ENCODE measurements at regions of chr1 and their contacts with region 1.

Region 1: DNA sequence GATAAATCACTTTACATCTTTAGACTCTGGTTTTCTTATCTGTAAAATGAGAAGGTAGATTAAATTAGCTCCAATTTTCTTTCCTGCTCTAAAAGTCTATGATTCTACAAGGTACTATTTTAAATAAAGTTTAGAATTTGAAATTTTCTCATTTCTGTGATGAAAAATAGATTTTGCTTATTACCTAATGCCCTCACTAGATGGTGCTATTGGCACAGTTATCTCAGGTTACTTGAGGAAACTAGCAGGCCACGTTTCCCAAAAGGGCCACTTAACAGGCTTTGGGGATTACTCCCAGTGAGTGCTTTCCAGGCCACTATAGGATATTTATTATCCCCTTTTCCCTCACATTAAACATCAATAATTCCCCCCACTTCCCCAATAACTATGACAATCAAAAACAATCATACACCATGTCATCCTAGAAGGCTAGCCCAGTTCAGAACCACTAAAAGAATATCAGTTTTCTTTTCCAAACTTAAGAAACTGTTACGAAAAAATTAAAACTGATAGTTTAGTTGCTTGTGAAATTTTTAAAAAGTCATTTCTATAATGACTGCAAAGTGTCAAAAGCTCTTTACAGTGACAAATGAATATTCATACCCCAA is 30.6 kb downstream of the OMA1 start:
- DNase-seq: peak in 4 of 10 donors; percentile 15 to 44 (median 31)
- H3K4me3 ChIP-seq: no peak overlapping the region
- H3K27ac ChIP-seq: peak overlapping the region in 3 of 59 donors; percentile 3 to 19 (median 8)
- H3K27me3 ChIP-seq: no peaks in the 10 kb centered on the region
- CTCF ChIP-seq: peak; percentile 62 to 97 (median 83)

Region 2: GRCh38 chr1:58546520-58547308 is 30.8 kb after region 1 on chr1 and contains the start of gene OMA1:
- intact Hi-C with region 1: loop called (anchors 2 kb)
- DNase-seq: peak; percentile 90 to 96 (median 93)
- H3K4me3 ChIP-seq: peak within 1 kb of the TSS; percentile 57 to 95 (median 82)
- H3K27ac ChIP-seq: peak within 1 kb of the TSS; percentile 87 to 100 (median 98)
- H3K27me3 ChIP-seq: no peaks in the 10 kb centered on the region
- CTCF ChIP-seq: peak; percentile 88 to 99 (median 97)
- total RNA-seq, gene OMA1: 12.0 to 51.9 (median 29.6) TPM

Region 3: DNA sequence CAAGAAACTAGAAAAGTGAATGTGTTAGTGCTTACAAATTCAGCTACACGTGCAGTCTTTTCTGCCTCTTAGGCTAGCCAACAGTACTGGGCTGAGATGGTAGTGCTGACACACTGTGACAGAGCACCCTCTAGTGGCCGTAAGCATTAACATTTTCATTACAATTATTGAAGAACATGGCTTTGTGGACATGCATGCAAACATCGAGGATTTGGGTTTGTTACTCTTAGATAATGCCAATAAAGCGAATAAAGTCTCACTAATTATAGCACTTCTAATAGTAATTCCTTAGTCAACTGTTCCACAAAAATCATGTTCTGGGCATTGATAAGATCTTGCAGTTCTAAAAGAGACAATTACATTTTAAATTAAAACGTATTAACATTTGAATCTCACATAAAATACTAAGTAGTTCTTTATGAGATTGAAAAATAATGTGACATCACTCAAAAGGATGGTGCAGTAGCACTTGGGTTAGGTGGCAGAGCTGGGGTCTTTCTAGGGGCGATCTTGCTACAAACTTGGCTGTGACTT is 136.8 kb after region 1 on chr1:
- intact Hi-C with region 1: loop called (anchors 2 to 5 kb)
- DNase-seq: peak in 9 of 10 donors; percentile 41 to 82 (median 53)
- H3K4me3 ChIP-seq: no peak overlapping the region
- H3K27ac ChIP-seq: peak overlapping the region in 8 of 59 donors; percentile 9 to 37 (median 22)
- H3K27me3 ChIP-seq: no peaks in the 10 kb centered on the region
- CTCF ChIP-seq: peak; percentile 76 to 98 (median 92)

Region 4: GRCh38 chr1:58768971-58769808 is 253.3 kb after region 1 on chr1:
- intact Hi-C with region 1: loop called in 1 of 2 experiments (anchors 10 kb)
- DNase-seq: peak; percentile 54 to 86 (median 78)
- H3K4me3 ChIP-seq: no peak overlapping the region
- H3K27ac ChIP-seq: no peak overlapping the region
- H3K27me3 ChIP-seq: no peaks in the 10 kb centered on the region
- CTCF ChIP-seq: peak; percentile 48 to 91 (median 85)

Region 5: DNA sequence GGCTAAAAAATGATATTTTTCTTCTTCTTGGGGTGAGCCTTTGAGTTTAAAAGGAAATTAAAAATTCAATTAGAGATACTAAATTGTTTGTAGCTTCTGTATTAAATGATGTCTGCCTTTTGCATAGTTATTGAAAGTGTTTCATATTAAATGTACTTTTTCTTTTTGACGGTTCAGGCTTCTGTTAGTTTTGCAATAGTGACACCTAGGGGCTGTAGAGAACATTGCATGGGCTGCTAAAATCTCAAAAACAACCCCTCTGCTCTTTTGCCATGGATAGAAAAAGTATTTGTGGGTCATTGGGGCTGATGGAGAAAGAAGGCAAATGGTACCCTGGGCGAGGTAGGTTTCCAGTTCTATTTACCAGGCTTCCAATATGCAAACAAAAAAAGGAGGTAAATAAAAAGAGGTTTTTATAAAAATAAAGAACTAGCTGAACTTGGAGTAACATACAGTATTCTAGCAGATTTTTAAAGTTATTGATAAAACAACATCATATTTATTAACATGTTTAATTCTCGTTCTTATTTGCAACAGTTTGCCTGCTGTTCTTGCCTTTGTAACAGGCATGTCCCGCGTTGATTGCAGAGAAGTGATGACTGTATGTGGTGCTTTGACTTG is 1183.4 kb after region 1 on chr1:
- intact Hi-C with region 1: loop called in 1 of 2 experiments (anchors 10 kb)
- DNase-seq: peak in 1 of 10 donors; percentile 22
- H3K4me3 ChIP-seq: no peak overlapping the region
- H3K27ac ChIP-seq: peak overlapping the region in 1 of 59 donors; percentile 2
- H3K27me3 ChIP-seq: no peaks in the 10 kb centered on the region
- CTCF ChIP-seq: peak; percentile 89 to 98 (median 95)

Region 6: DNA sequence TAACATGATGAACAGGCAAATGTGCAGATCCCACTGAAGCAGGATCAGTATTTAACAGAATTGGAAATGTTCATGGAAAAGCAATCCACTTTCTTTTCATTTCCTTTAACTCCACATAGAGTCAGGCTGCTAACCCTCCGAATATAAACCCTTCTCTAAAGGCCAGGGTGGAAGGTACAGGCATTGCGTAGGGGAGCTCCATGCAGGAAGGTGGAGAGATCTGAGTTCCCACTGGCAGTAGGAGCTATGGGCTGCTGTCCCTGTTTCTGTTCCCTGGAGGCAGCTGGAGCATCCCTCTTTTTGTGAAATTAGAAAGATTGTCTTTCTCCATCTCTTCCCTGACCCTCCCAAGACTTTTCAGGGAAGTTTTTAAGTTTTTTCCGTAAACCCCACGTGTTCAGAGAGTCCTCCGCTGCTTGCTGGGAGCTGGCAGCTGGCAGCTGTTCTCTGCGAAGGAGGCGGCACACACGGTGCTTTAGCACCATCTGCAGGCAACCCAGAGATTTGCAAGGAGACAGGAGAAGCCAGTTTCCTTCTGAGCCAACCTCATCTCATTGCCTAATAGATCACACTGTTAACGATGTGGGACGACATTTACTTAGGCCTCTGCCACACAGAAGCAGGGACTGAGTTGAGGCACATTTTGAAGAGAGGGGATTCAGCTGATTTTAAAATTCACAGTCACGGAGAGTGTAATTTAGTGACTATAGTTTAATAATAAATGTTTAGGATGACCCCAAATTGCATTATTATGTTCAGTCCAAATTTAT is 1243.4 kb after region 1 on chr1:
- intact Hi-C with region 1: loop called in 1 of 2 experiments (anchors 5 kb)
- DNase-seq: peak; percentile 62 to 88 (median 82)
- H3K4me3 ChIP-seq: peak overlapping the region in 45 of 59 donors; percentile 3 to 59 (median 35)
- H3K27ac ChIP-seq: peak overlapping the region in 9 of 59 donors; percentile 8 to 59 (median 30)
- H3K27me3 ChIP-seq: no peaks in the 10 kb centered on the region
- CTCF ChIP-seq: peak; percentile 68 to 100 (median 96)